AG04449 (cell line): ENCODE measurements at regions of chr18 and their contacts with region 1.

Region 1: GRCh38 chr18:36015629-36016028 is 43.1 kb downstream of the RMP24 start:
- DNase-seq: no peak
- H3K4me3 ChIP-seq: no peak overlapping the region
- CTCF ChIP-seq: no peak

Region 2: DNA sequence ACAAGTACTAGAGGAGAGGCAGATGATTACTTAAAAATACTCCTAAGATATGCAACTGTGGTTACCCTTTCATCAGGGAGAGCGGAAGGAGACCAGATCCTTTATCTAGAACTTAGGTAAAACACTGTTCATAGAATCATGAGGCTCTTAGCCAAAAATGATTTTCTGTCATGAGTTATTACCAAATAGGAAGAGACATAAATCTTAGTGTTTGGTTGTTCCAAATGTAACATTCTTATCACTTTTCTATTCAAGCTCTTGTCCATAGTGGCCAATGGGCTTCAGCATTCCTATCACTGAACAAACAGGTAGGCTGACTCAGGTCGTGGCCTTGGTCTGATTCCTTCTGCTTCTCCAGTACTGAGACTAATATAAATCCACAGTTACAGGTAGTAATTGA is 13.2 kb after region 1 on chr18:
- CTCF ChIA-PET with region 1: interaction called, 32 read pairs
- POLR2A ChIA-PET with region 1: no interaction called
- DNase-seq: no peak
- H3K4me3 ChIP-seq: no peak overlapping the region
- CTCF ChIP-seq: no peak

Region 3: GRCh38 chr18:36041146-36041545 is 25.5 kb after region 1 on chr18:
- CTCF ChIA-PET with region 1: interaction called, 13 read pairs
- POLR2A ChIA-PET with region 1: no interaction called
- DNase-seq: no peak
- H3K4me3 ChIP-seq: no peak overlapping the region
- CTCF ChIP-seq: no peak

Region 4: GRCh38 chr18:36095936-36096519 is 80.4 kb after region 1 on chr18:
- CTCF ChIA-PET with region 1: interaction called, 28 read pairs
- POLR2A ChIA-PET with region 1: no interaction called
- DNase-seq: peak; percentile 53
- H3K4me3 ChIP-seq: no peak overlapping the region
- CTCF ChIP-seq: peak; percentile 24

Region 5: GRCh38 chr18:36129300-36130038 is 113.8 kb after region 1 on chr18 and contains the starts of genes ELP2 and SLC39A6:
- CTCF ChIA-PET with region 1: interaction called, 11 read pairs
- POLR2A ChIA-PET with region 1: no interaction called
- DNase-seq: peak; percentile 76
- H3K4me3 ChIP-seq: peak within 1 kb of the TSS; percentile 98
- CTCF ChIP-seq: no peak

Region 6: DNA sequence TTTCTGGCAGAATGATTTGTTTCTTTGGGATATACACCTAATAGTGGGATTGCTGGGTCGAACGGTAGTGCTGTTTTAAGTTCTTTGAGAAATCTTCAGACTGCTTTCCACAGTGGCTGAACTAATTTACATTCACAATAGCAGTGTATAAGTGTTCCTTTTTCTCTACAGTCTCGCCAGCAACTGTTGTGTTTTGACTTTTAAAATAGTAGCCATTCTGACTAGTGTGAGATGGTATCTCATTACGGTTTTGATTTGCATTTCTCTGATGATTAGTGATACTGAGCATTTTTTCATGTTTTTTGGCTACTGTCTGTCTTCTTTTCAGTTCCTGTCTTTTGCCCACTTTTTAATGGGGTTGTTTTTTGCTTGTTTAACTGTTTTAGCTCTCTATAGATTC is 1119.5 kb after region 1 on chr18:
- CTCF ChIA-PET with region 1: no interaction called
- POLR2A ChIA-PET with region 1: no interaction called
- DNase-seq: no peak
- H3K4me3 ChIP-seq: no peak overlapping the region
- CTCF ChIP-seq: no peak